AG04449 (cell line): ENCODE measurements at regions of chr12 and their contacts with region 1.

Region 1: GRCh38 chr12:7092229-7092985 is at the start of gene C1R:
- DNase-seq: peak; percentile 60
- H3K4me3 ChIP-seq: peak within 1 kb of the TSS; percentile 66
- CTCF ChIP-seq: peak; percentile 74

Region 2: GRCh38 chr12:6944381-6945186 is 147.8 kb before region 1 on chr12:
- CTCF ChIA-PET with region 1: interaction called, 10 read pairs
- POLR2A ChIA-PET with region 1: interaction called, 5 read pairs
- DNase-seq: no peak
- H3K4me3 ChIP-seq: peak overlapping the region; percentile 66
- CTCF ChIP-seq: peak; percentile 89

Region 3: DNA sequence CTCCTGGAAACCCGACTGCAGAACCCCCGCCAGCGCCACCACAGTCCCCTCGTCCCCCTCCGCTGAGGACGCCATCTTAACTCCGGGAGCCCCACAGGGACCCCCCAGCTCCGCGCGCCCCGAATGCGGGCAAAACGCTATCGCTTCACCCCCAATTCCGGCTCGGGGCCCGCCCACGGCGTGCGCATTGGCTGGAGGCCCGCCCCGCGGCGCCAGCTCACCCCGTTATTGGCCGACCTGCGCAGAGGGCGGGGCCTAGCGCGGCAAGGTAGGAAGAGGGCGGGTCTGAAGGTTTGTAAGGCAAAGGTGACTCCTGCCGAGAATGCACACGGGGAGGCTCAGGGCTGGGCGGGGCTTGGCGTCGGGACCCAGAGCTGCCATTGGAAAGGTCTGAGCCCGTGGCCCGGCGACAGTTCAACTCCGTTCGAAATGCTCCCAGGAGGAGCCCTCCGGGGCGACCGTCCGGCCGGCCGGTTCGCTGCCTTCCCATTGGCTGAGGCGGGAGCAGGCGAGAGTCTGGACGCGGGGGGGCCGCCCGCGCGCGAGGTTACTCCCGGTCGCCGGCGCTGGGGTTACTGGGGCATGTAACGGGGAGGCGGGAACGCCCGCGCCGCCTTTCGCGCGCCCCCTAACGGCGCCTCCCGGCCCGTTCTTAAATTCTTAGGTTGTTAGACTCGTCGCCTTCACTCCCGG is 73.9 kb before region 1 on chr12 and contains the start of gene LPCAT3:
- CTCF ChIA-PET with region 1: interaction called, 12 read pairs
- POLR2A ChIA-PET with region 1: no interaction called
- DNase-seq: peak; percentile 50
- H3K4me3 ChIP-seq: peak within 1 kb of the TSS; percentile 89
- CTCF ChIP-seq: peak; percentile 90

Region 4: GRCh38 chr12:7042842-7043241 is 49.6 kb before region 1 on chr12:
- CTCF ChIA-PET with region 1: interaction called, 10 read pairs
- POLR2A ChIA-PET with region 1: no interaction called
- DNase-seq: no peak
- H3K4me3 ChIP-seq: no peak overlapping the region
- CTCF ChIP-seq: no peak

Region 5: GRCh38 chr12:7060353-7060954 is 32.0 kb before region 1 on chr12 and contains the start of gene C1S:
- CTCF ChIA-PET with region 1: interaction called, 127 read pairs
- POLR2A ChIA-PET with region 1: no interaction called
- DNase-seq: peak; percentile 96
- H3K4me3 ChIP-seq: peak within 1 kb of the TSS; percentile 53
- CTCF ChIP-seq: peak; percentile 76

Region 6: DNA sequence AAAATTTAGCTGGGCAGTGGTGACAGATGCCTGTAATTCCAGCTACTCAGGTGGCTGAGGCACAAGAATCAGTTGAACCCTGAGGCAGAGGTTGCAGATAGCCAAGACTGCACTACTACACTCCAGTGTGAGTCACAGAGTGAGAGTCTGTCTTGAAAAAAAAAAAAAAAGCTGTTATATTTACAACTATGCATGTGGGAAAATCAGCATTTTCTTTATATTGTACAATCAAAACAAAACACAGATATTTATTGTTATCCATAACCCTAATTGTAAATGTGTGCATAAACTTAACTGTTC is 12.6 kb before region 1 on chr12:
- CTCF ChIA-PET with region 1: interaction called, 14 read pairs
- POLR2A ChIA-PET with region 1: no interaction called
- DNase-seq: no peak
- H3K4me3 ChIP-seq: no peak overlapping the region
- CTCF ChIP-seq: no peak